Activated CD4-positive, alpha-beta T cell treated with anti-CD3 and anti-CD28 coated beads for 36 hours (primary cell): ENCODE measurements at regions of chr14 and their contacts with region 1.

Region 1: DNA sequence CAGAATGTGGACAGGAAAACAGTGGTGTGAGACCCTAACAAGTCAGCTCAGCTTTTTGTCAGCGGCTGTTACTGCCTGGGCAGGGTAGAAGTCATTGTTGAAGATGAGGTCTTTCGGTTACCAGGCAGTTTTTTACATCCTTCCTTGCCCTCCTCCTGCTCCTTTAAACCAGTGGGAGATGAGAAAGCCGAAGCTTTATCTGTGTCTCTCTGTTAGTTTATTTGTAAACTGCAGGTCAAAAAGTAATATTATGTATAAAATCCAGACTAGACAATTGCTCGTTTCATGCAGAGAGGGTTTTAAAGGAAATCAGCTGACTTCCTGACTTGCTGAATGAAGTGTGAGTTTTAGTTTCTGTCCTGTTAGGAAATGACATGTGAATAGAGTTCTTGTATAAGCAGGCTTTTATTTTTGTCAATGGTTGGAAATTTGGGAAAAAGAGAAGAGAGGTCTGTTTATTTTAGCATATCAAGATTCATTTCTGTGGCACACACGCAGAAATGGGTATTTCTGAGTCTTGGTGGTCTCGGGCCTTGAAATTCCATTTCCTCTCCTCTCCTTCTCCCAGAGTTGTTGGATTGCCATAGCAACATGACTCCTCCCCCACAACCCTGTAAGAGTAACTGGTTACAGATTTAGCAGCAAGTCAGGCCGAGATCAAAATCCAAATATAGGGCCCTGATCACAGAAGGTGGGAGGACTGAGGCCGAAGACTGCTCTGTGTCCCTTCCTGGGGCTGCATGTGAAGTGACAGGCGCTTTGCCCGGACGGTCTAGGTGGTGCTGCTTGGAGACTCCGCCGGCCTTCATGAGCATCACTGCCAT is 60.8 kb downstream of the SAMD4A start:
- DNase-seq: peak; percentile 50
- ATAC-seq: peak; percentile 74
- H3K4me3 Mint-ChIP-seq: peak overlapping the region; percentile 59
- H3K27ac Mint-ChIP-seq: peak overlapping the region; percentile 96
- H3K4me1 Mint-ChIP-seq: peaks cover 44% of the 10 kb centered on the region
- H3K27me3 Mint-ChIP-seq: no peaks in the 10 kb centered on the region

Region 2: GRCh38 chr14:54555651-54556050 is 72.1 kb before region 1 on chr14:
- CTCF ChIA-PET with region 1: no interaction called
- POLR2A ChIA-PET with region 1: no interaction called
- intact Hi-C with region 1: no loop called
- DNase-seq: no peak
- ATAC-seq: no peak
- H3K4me3 Mint-ChIP-seq: no peak overlapping the region
- H3K27ac Mint-ChIP-seq: no peak overlapping the region
- H3K4me1 Mint-ChIP-seq: no peaks in the 10 kb centered on the region
- H3K27me3 Mint-ChIP-seq: peaks cover 8% of the 10 kb centered on the region

Region 3: DNA sequence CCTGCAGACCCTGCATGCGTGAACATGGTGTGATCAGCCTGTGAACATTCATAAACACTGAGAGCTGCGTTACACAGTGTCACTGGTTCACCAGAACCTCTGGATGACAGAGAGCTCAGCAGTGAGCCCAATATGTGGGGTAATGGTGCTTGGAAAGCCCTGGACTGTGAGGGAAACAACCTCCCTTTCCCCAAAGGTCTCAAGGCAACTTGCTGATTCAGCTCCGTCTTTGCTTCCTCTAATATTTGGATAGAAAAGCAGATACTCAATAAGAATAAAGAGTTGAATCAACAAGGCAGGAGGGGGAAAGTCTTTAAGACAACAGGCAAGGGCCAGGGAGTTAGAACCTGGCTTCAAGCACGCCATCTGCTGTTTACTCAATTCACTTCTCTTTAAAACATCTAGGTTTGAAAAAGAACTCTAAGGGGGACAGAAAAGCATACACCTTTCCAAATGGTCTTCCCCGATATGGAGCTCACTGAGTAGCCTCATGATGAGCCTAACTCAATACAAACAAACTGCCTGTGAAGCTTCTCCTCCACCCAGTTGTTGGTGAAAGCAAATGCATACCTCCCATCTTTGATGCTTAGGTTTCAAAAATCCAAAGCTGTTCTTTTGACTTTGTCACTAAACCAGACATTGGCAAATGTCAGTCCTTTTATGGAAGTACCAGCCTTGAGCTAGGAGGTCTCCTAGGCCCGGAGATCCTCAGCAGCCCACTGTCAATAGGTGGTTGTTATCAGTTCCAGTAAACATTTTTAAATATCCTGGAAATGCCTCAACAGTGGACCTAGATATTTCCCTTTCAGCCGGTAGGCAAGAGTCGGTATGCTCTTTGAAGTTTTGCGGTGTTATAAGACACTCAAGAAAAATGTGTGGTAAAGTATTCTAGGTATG is 15.3 kb after region 1 on chr14:
- CTCF ChIA-PET with region 1: interaction called, 3 read pairs
- POLR2A ChIA-PET with region 1: no interaction called
- intact Hi-C with region 1: loop called in 1 of 2 experiments (anchors 1 kb)
- DNase-seq: peak; percentile 22
- ATAC-seq: no peak
- H3K4me3 Mint-ChIP-seq: no peak overlapping the region
- H3K27ac Mint-ChIP-seq: no peak overlapping the region
- H3K4me1 Mint-ChIP-seq: peaks cover 12% of the 10 kb centered on the region
- H3K27me3 Mint-ChIP-seq: no peaks in the 10 kb centered on the region

Region 4: DNA sequence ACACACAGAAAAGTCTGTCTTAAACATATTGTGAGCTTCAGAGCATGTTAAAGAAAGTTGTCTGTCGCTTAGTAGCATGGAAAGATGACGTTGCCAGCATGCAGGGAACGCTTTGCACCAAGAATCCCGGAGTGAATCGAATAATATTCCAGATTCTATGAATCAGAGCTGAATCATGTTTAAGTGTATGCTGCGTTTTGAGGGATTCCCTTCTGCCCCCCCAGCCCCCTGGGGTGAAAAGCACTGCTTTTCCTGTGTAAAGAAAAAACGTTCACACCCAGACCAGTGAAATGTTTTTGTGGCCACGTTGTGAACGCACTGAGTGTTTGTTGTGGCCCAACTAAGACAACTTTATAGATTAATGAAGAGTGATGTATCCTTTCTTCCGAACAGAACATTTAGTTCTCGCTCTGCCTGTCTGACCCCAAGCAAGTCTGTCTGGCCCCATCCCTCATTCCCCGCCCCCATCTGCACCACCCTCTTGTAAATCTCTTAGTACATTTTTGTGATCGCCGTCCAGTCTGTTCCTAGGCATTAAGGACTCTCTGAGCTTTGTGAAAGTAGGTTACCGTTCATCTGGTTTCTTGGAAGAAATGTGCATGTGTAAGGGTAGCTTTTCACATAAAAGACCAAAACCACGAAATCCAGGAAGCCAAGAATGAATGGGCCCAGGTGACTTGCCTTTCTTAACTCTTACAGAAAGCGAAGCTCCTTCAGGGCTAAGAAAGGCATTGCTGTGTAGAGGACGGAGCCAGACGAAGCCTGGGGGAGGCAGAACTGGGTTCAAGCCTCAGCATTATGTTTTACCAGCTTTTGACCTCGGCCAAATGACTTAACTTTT is 42.2 kb after region 1 on chr14:
- CTCF ChIA-PET with region 1: interaction called, 3 read pairs
- POLR2A ChIA-PET with region 1: no interaction called
- intact Hi-C with region 1: loop called in 1 of 2 experiments (anchors 5 kb)
- DNase-seq: peak; percentile 38
- ATAC-seq: peak; percentile 83
- H3K4me3 Mint-ChIP-seq: no peak overlapping the region
- H3K27ac Mint-ChIP-seq: peak overlapping the region; percentile 39
- H3K4me1 Mint-ChIP-seq: peaks cover 29% of the 10 kb centered on the region
- H3K27me3 Mint-ChIP-seq: peaks cover 22% of the 10 kb centered on the region

Region 5: GRCh38 chr14:54691525-54692283 is 64.0 kb after region 1 on chr14:
- CTCF ChIA-PET with region 1: no interaction called
- POLR2A ChIA-PET with region 1: no interaction called
- intact Hi-C with region 1: no loop called
- DNase-seq: peak; percentile 76
- ATAC-seq: peak; percentile 78
- H3K4me3 Mint-ChIP-seq: no peak overlapping the region
- H3K27ac Mint-ChIP-seq: no peak overlapping the region
- H3K4me1 Mint-ChIP-seq: peaks cover 12% of the 10 kb centered on the region
- H3K27me3 Mint-ChIP-seq: peaks cover 26% of the 10 kb centered on the region

Region 6: GRCh38 chr14:54730156-54730961 is 102.6 kb after region 1 on chr14:
- CTCF ChIA-PET with region 1: interaction called, 4 read pairs
- POLR2A ChIA-PET with region 1: no interaction called
- intact Hi-C with region 1: loop called (anchors 1 to 5 kb)
- DNase-seq: peak; percentile 61
- ATAC-seq: peak; percentile 93
- H3K4me3 Mint-ChIP-seq: peak overlapping the region; percentile 58
- H3K27ac Mint-ChIP-seq: peak overlapping the region; percentile 94
- H3K4me1 Mint-ChIP-seq: peaks cover 40% of the 10 kb centered on the region
- H3K27me3 Mint-ChIP-seq: peaks cover 18% of the 10 kb centered on the region

Region 7: GRCh38 chr14:54902521-54903420 is 275.0 kb after region 1 on chr14 and contains the start of gene GCH1:
- CTCF ChIA-PET with region 1: no interaction called
- POLR2A ChIA-PET with region 1: no interaction called
- intact Hi-C with region 1: loop called in 1 of 2 experiments (anchors 5 kb)
- DNase-seq: peak; percentile 81
- ATAC-seq: peak; percentile 80
- H3K4me3 Mint-ChIP-seq: peak within 1 kb of the TSS; percentile 88
- H3K27ac Mint-ChIP-seq: peak within 1 kb of the TSS; percentile 90
- H3K4me1 Mint-ChIP-seq: peaks cover 26% of the 10 kb centered on the region
- H3K27me3 Mint-ChIP-seq: no peaks in the 10 kb centered on the region
- total RNA-seq, gene GCH1: 28.1 to 36.4 TPM

Region 8: DNA sequence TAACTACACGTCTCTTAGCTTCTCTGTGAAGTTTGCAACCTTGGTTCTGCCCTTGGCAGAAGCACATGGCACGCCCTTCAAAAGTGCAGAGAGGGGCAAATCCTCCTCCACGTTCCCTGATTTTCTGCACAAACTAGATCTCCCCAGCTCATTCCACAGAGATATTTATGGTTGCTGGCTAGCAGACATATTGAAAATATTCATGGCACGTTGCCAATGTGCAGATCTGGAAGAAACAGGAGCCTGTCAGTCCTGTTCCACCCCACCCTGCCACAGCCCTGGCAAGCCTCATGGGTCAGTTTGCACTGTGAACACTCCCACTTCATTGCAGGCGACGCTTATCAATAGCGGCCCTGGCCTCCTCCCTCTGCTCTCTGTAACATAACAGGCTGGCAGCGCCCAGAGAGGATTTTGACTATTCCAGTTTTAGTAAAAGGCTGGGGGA is 494.8 kb after region 1 on chr14:
- CTCF ChIA-PET with region 1: no interaction called
- POLR2A ChIA-PET with region 1: no interaction called
- intact Hi-C with region 1: no loop called
- DNase-seq: no peak
- ATAC-seq: no peak
- H3K4me3 Mint-ChIP-seq: no peak overlapping the region
- H3K27ac Mint-ChIP-seq: no peak overlapping the region
- H3K4me1 Mint-ChIP-seq: no peaks in the 10 kb centered on the region
- H3K27me3 Mint-ChIP-seq: peaks cover 3% of the 10 kb centered on the region